ENCODE measurements at regions of chr11 and their contacts with region 1.

Region 1: DNA sequence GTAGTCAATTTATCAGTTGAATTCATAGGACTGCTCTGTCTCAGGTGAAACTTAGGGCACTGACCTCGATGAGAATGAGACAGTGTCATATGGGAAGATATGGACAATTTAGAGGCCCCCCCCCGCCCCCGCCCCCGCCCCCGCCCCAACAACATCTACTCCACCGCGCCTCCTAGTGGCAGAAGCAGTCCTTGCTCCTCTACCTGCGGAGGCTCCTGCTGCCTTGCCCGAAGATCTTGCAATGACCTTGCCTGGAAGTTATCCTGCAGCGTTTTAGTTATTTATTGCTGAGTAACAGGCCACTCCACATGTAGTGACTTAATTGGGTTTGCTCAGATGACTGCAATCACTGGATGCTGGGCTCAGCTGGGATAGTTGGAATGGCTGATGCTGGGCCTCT is 15.2 kb downstream of the SERPINH1 start:
- DNase-seq: no peak
- H3K4me3 ChIP-seq: no peak overlapping the region
- H3K27me3 ChIP-seq: no peaks in the 10 kb centered on the region
- CTCF ChIP-seq: peak; percentile 66

Region 2: DNA sequence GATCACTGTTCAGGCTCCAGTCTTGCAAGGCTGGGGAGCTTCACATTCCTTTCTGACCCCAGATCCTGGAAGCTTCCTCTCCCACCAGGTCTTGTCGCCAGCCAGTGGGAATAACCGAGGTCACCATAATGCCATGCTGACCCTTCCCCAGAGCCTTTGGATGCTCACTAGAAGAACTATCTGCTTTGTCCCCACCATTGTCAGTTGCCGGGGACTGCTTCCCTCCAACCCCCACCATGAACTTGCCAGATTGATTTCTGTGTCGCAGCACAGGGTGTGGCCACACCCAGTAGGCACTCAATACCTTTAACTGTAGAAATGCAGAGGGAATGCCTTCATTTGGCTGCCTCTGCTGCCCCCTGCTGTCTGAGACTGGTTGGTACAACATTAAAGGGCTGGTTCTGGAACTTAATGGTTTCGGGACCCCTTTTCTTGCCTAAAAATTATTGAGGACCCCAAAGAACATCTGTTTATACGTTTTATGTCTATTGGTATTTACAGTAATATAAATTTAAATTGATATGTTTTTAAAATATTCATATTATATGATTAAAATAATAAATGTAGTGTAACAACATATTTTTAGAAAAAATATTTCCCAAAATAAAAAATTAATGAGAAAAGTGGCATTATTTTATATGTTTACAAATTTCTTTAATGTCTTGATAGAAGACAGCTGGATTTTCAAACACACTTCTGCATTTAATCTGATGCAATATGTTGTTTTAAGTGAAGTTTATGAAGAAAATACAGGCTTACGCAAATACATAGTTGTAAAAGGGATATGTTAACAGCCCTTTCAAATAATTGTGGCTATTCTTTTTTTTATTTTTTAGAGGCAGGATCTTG is 44.8 kb before region 1 on chr11:
- CTCF ChIA-PET with region 1: no interaction called
- POLR2A ChIA-PET with region 1: no interaction called
- DNase-seq: no peak
- H3K4me3 ChIP-seq: no peak overlapping the region
- H3K27me3 ChIP-seq: peaks cover 7% of the 10 kb centered on the region; the same call in 1 of the 2 replicates
- CTCF ChIP-seq: peak; percentile 79

Region 3: DNA sequence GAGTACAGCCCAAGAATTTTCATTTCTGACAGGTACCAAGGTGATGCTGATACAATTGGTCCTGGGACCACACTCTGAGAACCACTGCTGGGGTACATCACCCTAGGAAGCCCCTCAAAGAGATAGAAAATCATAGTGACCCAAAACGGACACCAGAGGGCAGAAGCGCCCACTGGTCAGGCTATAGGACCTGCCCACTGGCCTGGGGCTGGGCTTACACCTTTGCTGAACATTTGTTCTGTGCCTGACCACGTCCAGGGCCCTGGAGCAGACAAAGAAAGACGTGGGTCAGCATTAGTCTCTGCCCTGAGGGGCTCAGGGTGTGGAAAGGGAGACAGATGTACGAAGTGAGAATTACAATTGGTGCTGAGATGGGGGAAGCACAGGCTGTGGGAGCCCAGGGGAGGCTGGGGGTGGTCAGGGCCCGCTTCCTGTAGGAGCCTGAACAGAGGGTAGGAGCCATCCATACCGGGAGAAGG is 29.6 kb before region 1 on chr11:
- CTCF ChIA-PET with region 1: interaction called, 69 read pairs
- POLR2A ChIA-PET with region 1: no interaction called
- DNase-seq: no peak
- H3K4me3 ChIP-seq: no peak overlapping the region
- H3K27me3 ChIP-seq: peaks cover 5% of the 10 kb centered on the region
- CTCF ChIP-seq: peak; percentile 83

Region 4: GRCh38 chr11:75554258-75555022 is 22.8 kb before region 1 on chr11:
- CTCF ChIA-PET with region 1: interaction called, 74 read pairs
- POLR2A ChIA-PET with region 1: interaction called, 3 read pairs
- DNase-seq: peak; percentile 99
- H3K4me3 ChIP-seq: no peak overlapping the region
- H3K27me3 ChIP-seq: no peaks in the 10 kb centered on the region
- CTCF ChIP-seq: no peak

Region 5: DNA sequence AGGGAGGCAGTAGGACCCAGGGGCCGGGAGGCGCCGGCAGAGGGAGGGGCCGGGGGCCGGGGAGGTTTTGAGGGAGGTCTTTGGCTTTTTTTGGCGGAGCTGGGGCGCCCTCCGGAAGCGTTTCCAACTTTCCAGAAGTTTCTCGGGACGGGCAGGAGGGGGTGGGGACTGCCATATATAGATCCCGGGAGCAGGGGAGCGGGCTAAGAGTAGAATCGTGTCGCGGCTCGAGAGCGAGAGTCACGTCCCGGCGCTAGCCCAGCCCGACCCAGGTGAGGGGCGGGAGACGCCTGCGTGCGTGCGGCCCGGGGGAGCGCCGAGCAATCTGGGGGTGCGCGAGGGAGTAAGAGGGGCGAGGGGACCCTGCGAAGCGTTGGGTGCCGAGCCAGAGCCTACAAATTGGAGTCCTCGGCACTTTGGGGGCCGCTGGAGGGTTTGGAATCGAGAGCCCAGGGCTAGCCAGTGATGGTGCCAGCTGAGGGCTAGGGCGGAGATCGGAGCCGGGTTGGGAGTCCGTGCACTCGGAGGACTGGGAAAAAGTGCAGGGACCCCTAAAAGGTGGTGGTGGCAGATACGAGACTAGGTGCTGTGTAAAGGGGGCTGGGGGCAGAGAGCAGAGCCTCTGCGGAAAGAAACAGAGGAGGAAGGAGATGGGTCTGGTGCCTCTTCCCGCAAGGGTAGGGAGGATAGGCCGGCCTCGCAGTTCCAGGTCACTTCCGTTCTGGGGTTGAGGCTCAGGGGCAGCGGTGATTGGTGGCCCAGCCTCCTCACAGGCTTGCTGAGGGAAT is 15.0 kb before region 1 on chr11 and contains the start of gene SERPINH1:
- CTCF ChIA-PET with region 1: interaction called, 74 read pairs
- POLR2A ChIA-PET with region 1: interaction called, 7 read pairs
- DNase-seq: no peak
- H3K4me3 ChIP-seq: peak within 1 kb of the TSS; percentile 96
- H3K27me3 ChIP-seq: no peaks in the 10 kb centered on the region
- CTCF ChIP-seq: no peak
- polyA plus RNA-seq, gene SERPINH1: 1,158 and 1,604 TPM in 2 replicates

Region 6: GRCh38 chr11:75714211-75714610 is 137.0 kb after region 1 on chr11:
- CTCF ChIA-PET with region 1: no interaction called
- POLR2A ChIA-PET with region 1: interaction called, 18 read pairs
- DNase-seq: no peak
- H3K4me3 ChIP-seq: no peak overlapping the region
- H3K27me3 ChIP-seq: peaks cover 7% of the 10 kb centered on the region
- CTCF ChIP-seq: no peak

Measured in BJ (cell line).